CD4-positive, alpha-beta T cell (primary cell): ENCODE measurements at regions of chr7 and their contacts with region 1.

Region 1: GRCh38 chr7:157612664-157613561 is 276.1 kb downstream of the DNAJB6 start:
- DNase-seq: peak; percentile 43 to 88 (median 69)
- ATAC-seq: peak; percentile 88
- H3K4me3 ChIP-seq: peak overlapping the region; percentile 66
- H3K4me3 Mint-ChIP-seq: peak overlapping the region; percentile 92
- H3K27ac ChIP-seq: peak overlapping the region in 1 of 2 donors; percentile 46
- H3K27ac Mint-ChIP-seq: peak overlapping the region; percentile 95
- H3K4me1 ChIP-seq: peaks cover 26% of the 10 kb centered on the region
- H3K4me1 Mint-ChIP-seq: peaks cover 33% of the 10 kb centered on the region
- H3K27me3 ChIP-seq: no peaks in the 10 kb centered on the region
- H3K27me3 Mint-ChIP-seq: no peaks in the 10 kb centered on the region
- CTCF ChIP-seq: no peak

Region 2: GRCh38 chr7:157474689-157475088 is 138.2 kb before region 1 on chr7:
- CTCF ChIA-PET with region 1: no interaction called
- POLR2A ChIA-PET with region 1: interaction called, 11 read pairs
- intact Hi-C with region 1: no loop called
- DNase-seq: peak in 1 of 14 experiments; percentile 33
- ATAC-seq: no peak
- H3K4me3 ChIP-seq: no peak overlapping the region
- H3K4me3 Mint-ChIP-seq: no peak overlapping the region
- H3K27ac ChIP-seq: no peak overlapping the region
- H3K27ac Mint-ChIP-seq: peak overlapping the region; percentile 27
- H3K4me1 ChIP-seq: peaks cover 76% of the 10 kb centered on the region
- H3K4me1 Mint-ChIP-seq: peaks cover 65% of the 10 kb centered on the region
- H3K27me3 ChIP-seq: no peaks in the 10 kb centered on the region
- H3K27me3 Mint-ChIP-seq: no peaks in the 10 kb centered on the region
- CTCF ChIP-seq: peak; percentile 28

Region 3: GRCh38 chr7:157490457-157490912 is 122.4 kb before region 1 on chr7:
- CTCF ChIA-PET with region 1: no interaction called
- POLR2A ChIA-PET with region 1: no interaction called
- intact Hi-C with region 1: loop called in 1 of 2 experiments (anchors 2 kb)
- DNase-seq: peak in 9 of 14 experiments; percentile 27 to 89 (median 38)
- ATAC-seq: peak; percentile 93
- H3K4me3 ChIP-seq: no peak overlapping the region
- H3K4me3 Mint-ChIP-seq: peak overlapping the region; percentile 17
- H3K27ac ChIP-seq: no peak overlapping the region
- H3K27ac Mint-ChIP-seq: peak overlapping the region; percentile 68
- H3K4me1 ChIP-seq: peaks cover 26% of the 10 kb centered on the region
- H3K4me1 Mint-ChIP-seq: peaks cover 39% of the 10 kb centered on the region
- H3K27me3 ChIP-seq: no peaks in the 10 kb centered on the region
- H3K27me3 Mint-ChIP-seq: no peaks in the 10 kb centered on the region
- CTCF ChIP-seq: no peak

Region 4: DNA sequence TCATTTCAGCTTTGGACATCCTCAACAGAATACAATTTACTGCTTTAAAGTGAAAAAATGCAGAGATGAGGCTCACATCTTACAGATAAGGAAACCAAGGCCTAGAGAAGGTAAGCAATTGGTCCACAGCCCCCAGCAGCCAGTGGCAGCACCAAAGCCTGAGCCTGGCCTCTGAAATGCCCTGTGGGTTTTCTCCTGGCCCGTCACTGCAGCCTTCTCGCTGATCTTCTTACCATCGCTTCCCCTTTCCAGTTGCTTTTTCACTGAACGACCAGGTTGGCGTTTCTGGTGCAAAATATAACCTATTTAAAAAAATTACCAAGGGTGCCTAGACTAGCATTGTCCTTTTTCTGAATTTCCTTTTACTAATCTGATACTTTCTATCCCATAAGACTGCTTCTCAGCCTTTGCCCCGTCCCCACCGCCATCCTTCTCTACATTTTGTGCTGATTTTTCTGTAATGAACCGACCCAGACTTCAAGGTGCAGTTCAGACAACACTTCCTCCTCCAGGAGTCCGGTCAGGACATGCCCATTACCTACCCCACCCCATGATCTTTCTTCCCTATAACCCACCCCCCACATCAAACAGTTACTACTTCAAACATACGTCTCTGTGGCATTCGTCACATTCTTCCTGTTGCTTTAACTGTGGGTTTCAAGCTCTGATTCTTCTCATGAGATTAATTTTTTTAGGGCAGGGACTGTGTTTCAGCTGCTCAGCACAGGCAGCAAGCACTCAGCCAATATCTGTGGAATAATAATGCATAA is 13.2 kb after region 1 on chr7:
- CTCF ChIA-PET with region 1: interaction called, 7 read pairs
- POLR2A ChIA-PET with region 1: interaction called, 38 read pairs
- intact Hi-C with region 1: loop called in 1 of 2 experiments (anchors 1 kb)
- DNase-seq: peak in 8 of 14 experiments; percentile 14 to 74 (median 42)
- ATAC-seq: peak; percentile 72
- H3K4me3 ChIP-seq: peak overlapping the region; percentile 19
- H3K4me3 Mint-ChIP-seq: peak overlapping the region; percentile 72
- H3K27ac ChIP-seq: no peak overlapping the region
- H3K27ac Mint-ChIP-seq: peak overlapping the region; percentile 68
- H3K4me1 ChIP-seq: peaks cover 57% of the 10 kb centered on the region
- H3K4me1 Mint-ChIP-seq: peaks cover 80% of the 10 kb centered on the region
- H3K27me3 ChIP-seq: peaks cover 0 to 3% of the 10 kb centered on the region in 2 experiments
- H3K27me3 Mint-ChIP-seq: no peaks in the 10 kb centered on the region
- CTCF ChIP-seq: no peak

Region 5: GRCh38 chr7:157668221-157668883 is 55.4 kb after region 1 on chr7:
- CTCF ChIA-PET with region 1: no interaction called
- POLR2A ChIA-PET with region 1: no interaction called
- intact Hi-C with region 1: loop called in 1 of 2 experiments (anchors 5 kb)
- DNase-seq: peak in 1 of 14 experiments; percentile 20
- ATAC-seq: no peak
- H3K4me3 ChIP-seq: no peak overlapping the region
- H3K4me3 Mint-ChIP-seq: peak overlapping the region; percentile 3
- H3K27ac ChIP-seq: no peak overlapping the region
- H3K27ac Mint-ChIP-seq: no peak overlapping the region
- H3K4me1 ChIP-seq: peaks cover 19% of the 10 kb centered on the region
- H3K4me1 Mint-ChIP-seq: peaks cover 28% of the 10 kb centered on the region
- H3K27me3 ChIP-seq: peaks cover 6% of the 10 kb centered on the region in 2 experiments
- H3K27me3 Mint-ChIP-seq: peaks cover 20% of the 10 kb centered on the region
- CTCF ChIP-seq: no peak

Region 6: DNA sequence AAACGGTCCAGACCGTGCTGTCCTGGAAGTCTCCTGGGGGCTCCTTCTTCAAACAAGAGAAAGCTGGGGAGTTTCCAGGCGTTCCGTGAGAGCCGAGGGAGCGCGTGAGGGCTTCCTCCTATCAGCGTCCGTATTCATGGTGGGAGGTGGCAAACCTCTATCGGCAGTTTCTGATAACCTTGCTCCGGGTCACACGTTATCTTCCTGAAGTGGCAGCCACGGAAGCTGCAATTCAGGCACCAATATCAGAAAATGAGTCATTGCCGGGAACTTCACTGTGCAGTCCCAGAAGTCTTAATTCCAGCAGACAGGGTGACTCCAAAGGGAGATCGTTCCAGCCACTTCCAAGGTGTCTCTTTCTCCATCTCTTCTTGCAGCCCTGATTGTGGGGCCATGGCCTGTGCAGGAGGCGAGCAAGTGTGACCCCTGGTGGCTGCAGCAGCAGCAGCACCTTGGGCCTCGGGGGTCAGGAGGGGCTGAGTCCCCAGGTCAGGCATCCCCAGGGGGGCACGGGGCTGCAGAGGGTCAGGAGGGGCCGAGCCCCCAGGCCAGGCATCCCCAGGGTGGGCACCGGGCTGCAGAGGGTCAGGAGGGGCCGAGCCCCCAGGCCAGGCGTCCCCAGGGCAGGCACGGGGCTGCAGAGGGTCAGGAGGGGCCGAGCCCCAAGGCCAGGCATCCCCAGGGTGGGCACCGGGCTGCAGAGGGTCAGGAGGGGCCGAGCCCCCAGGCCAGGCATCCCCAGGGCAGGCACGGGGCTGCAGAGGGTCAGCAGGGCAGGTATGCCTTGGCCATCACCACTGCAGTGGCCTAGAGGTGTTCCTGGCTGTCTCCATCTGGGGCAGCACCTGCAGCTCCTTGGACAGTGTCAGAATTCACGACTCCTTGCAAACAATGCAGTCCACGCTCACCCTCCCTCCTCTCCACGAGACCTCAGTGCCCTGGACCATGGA is 262.6 kb after region 1 on chr7:
- CTCF ChIA-PET with region 1: no interaction called
- POLR2A ChIA-PET with region 1: interaction called, 3 read pairs
- intact Hi-C with region 1: loop called in 1 of 2 experiments (anchors 5 kb)
- DNase-seq: peak; percentile 20 to 77 (median 49)
- ATAC-seq: peak; percentile 80
- H3K4me3 ChIP-seq: peak overlapping the region; percentile 48
- H3K4me3 Mint-ChIP-seq: peak overlapping the region; percentile 87
- H3K27ac ChIP-seq: peak overlapping the region in 1 of 2 donors; percentile 1
- H3K27ac Mint-ChIP-seq: peak overlapping the region; percentile 87
- H3K4me1 ChIP-seq: peaks cover 47% of the 10 kb centered on the region
- H3K4me1 Mint-ChIP-seq: peaks cover 37% of the 10 kb centered on the region
- H3K27me3 ChIP-seq: peaks cover 0 to 3% of the 10 kb centered on the region in 2 experiments
- H3K27me3 Mint-ChIP-seq: no peaks in the 10 kb centered on the region
- CTCF ChIP-seq: peak; percentile 73